Activated CD8-positive, alpha-beta T cell treated with anti-CD3 and anti-CD28 coated beads, Interleukin-2, amount 10 ng/mL, durations not matched to agents 7 days and 5 days (primary cell): ENCODE measurements at regions of chr17 and their contacts with region 1.

Region 1: DNA sequence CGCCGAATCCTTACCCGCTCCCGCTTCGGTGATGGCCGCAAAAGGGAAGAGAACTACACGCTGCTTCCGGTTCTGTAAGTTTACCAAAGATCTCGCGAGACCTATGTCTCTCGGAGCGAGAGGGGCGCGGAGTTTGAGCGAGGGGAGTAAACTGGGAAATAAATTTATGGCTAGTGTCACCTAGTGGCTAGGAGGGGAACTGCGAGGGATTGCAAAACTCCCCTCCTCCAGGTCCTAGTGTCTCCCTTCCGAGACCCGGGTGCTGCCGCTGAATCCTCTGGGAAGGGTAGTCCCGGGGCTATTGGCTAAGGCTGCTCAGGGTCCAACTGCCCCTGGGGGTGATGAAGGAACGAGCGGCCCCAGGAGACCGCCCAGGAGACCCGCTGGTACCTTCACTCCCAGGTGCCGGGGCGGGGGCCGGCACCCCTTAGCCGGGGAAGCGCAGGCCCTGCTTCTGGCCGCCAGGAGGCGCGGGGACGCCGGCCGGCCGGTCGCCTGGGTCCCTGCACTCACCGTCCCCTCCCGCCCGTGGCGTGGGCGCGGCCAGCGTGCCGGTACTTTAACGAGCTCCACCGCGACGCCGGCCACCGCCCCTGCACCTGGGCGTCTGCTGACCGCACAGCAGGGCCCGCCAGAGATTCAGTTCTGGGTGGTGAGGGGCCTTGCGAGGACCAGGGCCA is at the start of gene RPL26:
- DNase-seq: peak; percentile 98
- ATAC-seq: peak; percentile 96
- H3K4me3 Mint-ChIP-seq: peak within 1 kb of the TSS; percentile 99
- H3K27ac Mint-ChIP-seq: peak within 1 kb of the TSS; percentile 96
- H3K4me1 Mint-ChIP-seq: peaks cover 65% of the 10 kb centered on the region
- H3K27me3 Mint-ChIP-seq: no peaks in the 10 kb centered on the region
- total RNA-seq, gene RPL26: 1,633 to 1,747 TPM

Region 2: GRCh38 chr17:8393420-8394241 is 10.3 kb after region 1 on chr17:
- CTCF ChIA-PET with region 1: interaction called, 21 read pairs
- POLR2A ChIA-PET with region 1: interaction called, 7 read pairs
- DNase-seq: peak; percentile 76
- ATAC-seq: peak; percentile 91
- H3K4me3 Mint-ChIP-seq: peak overlapping the region; percentile 20
- H3K27ac Mint-ChIP-seq: peak overlapping the region; percentile 96
- H3K4me1 Mint-ChIP-seq: peaks cover 20% of the 10 kb centered on the region
- H3K27me3 Mint-ChIP-seq: peaks cover 22% of the 10 kb centered on the region

Region 3: GRCh38 chr17:8435245-8436168 is 52.2 kb after region 1 on chr17 and contains the start of gene NDEL1:
- CTCF ChIA-PET with region 1: interaction called, 10 read pairs
- POLR2A ChIA-PET with region 1: interaction called, 6 read pairs
- DNase-seq: peak; percentile 99
- ATAC-seq: peak; percentile 98
- H3K4me3 Mint-ChIP-seq: peak within 1 kb of the TSS; percentile 93
- H3K27ac Mint-ChIP-seq: peak within 1 kb of the TSS; percentile 95
- H3K4me1 Mint-ChIP-seq: peaks cover 31% of the 10 kb centered on the region
- H3K27me3 Mint-ChIP-seq: no peaks in the 10 kb centered on the region
- total RNA-seq, gene NDEL1: 48.1 to 52.5 TPM